Lower lobe of right lung (tissue), 2 donors: ENCODE measurements at regions of chr7 and their contacts with region 1.

Region 1: GRCh38 chr7:100894860-100895421 is 747 bp downstream of the ACHE start:
- DNase-seq: no peak
- ATAC-seq: peak; percentile 20 to 34
- H3K4me3 ChIP-seq: peak overlapping the region; percentile 58
- H3K27ac ChIP-seq: no peak overlapping the region
- H3K4me1 ChIP-seq: peaks cover 34% of the 10 kb centered on the region
- H3K27me3 ChIP-seq: peaks cover 63% of the 10 kb centered on the region
- CTCF ChIP-seq: peak; percentile 80

Region 2: DNA sequence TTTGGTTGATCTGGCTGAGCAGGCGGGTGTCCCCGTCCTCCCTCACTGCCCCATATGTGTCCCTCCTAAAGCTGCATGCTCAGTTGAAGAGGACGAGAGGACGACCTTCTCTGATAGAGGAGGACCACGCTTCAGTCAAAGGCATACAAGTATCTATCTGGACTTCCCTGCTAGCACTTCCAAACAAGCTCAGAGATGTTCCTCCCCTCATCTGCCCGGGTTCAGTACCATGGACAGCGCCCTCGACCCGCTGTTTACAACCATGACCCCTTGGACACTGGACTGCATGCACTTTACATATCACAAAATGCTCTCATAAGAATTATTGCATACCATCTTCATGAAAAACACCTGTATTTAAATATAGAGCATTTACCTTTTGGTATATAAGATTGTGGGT is 163.4 kb after region 1 on chr7:
- intact Hi-C with region 1: loop called (anchors 5 kb)
- DNase-seq: peak; percentile 51
- ATAC-seq: peak; percentile 65 to 78
- H3K4me3 ChIP-seq: no peak overlapping the region
- H3K27ac ChIP-seq: no peak overlapping the region
- H3K4me1 ChIP-seq: no peaks in the 10 kb centered on the region
- H3K27me3 ChIP-seq: peaks cover 54% of the 10 kb centered on the region
- CTCF ChIP-seq: no peak